Gastrocnemius medialis (tissue), 4 donors: ENCODE measurements at regions of chr2 and their contacts with region 1.

Region 1: GRCh38 chr2:54419388-54419787 is 36.7 kb upstream of the SPTBN1 start:
- DNase-seq: no peak
- ATAC-seq: peak in 1 of 2 donors; percentile 14
- H3K4me3 ChIP-seq: no peak overlapping the region
- H3K27ac ChIP-seq: peak overlapping the region; percentile 13 to 72 (median 46)
- H3K4me1 ChIP-seq: peaks cover 0 to 20% of the 10 kb centered on the region in 2 donors
- H3K27me3 ChIP-seq: no peaks in the 10 kb centered on the region
- CTCF ChIP-seq: no peak
- POLR2A ChIP-seq: no peak

Region 2: DNA sequence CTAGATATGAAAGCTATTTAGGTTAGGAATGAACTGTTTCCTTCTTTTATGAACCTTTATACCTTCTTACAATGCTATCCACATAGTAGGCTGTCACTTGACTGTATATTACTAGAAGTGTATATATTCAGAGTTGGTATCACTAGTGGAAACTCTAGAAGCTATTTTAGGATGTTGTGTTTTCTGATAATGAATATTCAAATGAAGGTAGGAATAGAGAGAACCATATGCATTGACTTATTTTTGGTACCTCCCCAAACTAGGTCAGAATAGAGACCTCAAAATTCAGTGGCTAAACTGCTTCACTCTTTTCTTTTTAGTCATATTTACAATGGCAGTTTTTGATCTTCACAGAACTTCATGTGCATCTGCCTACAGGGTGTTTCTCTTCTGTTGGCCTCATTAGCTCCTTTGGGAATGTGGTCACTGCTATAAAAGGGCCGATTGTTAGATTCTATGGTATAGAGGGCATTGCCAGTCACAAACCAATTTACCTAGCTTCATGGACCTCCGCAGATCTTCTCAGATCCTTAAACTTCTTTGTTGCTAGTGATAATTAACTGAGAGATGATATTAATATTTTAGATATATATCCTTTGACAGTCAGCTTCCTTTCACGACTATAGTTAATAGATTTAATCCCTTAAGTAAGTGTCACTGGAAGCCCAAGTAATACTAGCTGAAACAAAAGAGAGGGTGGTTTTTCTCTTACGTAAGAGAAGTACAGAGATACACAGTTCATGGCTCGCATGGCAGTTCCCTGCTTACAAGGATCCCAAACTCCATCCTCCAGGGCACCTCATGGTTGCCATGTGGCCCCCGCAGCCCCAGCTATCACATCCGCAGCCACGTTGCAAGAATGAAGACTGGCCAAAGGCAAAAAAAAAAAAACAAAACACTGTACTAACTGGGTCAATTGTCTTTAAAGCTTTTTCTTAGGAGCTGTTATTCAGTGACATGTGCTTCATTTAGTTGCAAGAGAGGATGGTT is 224.3 kb before region 1 on chr2:
- in situ Hi-C with region 1: no loop called
- intact Hi-C with region 1: no loop called
- DNase-seq: no peak
- ATAC-seq: no peak
- H3K4me3 ChIP-seq: no peak overlapping the region
- H3K27ac ChIP-seq: no peak overlapping the region
- H3K4me1 ChIP-seq: no peaks in the 10 kb centered on the region
- H3K27me3 ChIP-seq: no peaks in the 10 kb centered on the region
- CTCF ChIP-seq: no peak
- POLR2A ChIP-seq: no peak

Region 3: DNA sequence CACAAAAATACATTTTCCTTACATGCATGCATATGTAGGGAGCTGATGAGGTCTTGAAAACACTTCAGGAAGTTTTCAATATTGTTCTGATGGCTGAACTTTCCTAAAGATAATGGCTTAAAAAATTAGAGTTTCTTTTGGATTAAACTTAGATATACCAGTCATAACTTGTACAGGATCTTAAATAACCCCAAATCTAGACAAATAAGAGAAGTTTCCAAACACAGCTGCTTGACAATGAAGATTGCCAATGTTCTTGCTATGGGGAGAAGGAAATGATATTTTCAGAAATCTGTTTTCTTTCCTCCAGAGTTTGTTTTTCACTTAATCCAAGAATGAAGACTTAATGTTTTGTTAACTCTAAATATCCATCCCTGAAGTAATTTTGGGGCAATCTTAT is 17.8 kb before region 1 on chr2:
- in situ Hi-C with region 1: no loop called
- intact Hi-C with region 1: loop called (anchors 1 kb)
- DNase-seq: no peak
- ATAC-seq: no peak
- H3K4me3 ChIP-seq: no peak overlapping the region
- H3K27ac ChIP-seq: peak overlapping the region; percentile 37 to 70 (median 64)
- H3K4me1 ChIP-seq: peaks cover 0 to 10% of the 10 kb centered on the region in 2 donors
- H3K27me3 ChIP-seq: no peaks in the 10 kb centered on the region
- CTCF ChIP-seq: no peak
- POLR2A ChIP-seq: no peak